Natural killer cell (primary cell): ENCODE measurements at regions of chr19 and their contacts with region 1.

Region 1: GRCh38 chr19:37370880-37371661 is at the start of gene ZNF527:
- DNase-seq: peak; percentile 96 to 98
- ATAC-seq: peak; percentile 92 to 96 (median 93)
- H3K4me3 ChIP-seq: peak within 1 kb of the TSS; percentile 81
- H3K4me3 Mint-ChIP-seq: peak within 1 kb of the TSS; percentile 98
- H3K27ac ChIP-seq: peak within 1 kb of the TSS; percentile 94
- H3K27ac Mint-ChIP-seq: peak within 1 kb of the TSS; percentile 93 to 99
- H3K4me1 ChIP-seq: peaks cover 12% of the 10 kb centered on the region
- H3K4me1 Mint-ChIP-seq: peaks cover 17 to 19% of the 10 kb centered on the region in 2 donors
- H3K27me3 ChIP-seq: no peaks in the 10 kb centered on the region
- H3K27me3 Mint-ChIP-seq: no peaks in the 10 kb centered on the region
- CTCF ChIP-seq: no peak
- total RNA-seq, gene ZNF527: 9.9 to 14.0 (median 13.6) TPM

Region 2: DNA sequence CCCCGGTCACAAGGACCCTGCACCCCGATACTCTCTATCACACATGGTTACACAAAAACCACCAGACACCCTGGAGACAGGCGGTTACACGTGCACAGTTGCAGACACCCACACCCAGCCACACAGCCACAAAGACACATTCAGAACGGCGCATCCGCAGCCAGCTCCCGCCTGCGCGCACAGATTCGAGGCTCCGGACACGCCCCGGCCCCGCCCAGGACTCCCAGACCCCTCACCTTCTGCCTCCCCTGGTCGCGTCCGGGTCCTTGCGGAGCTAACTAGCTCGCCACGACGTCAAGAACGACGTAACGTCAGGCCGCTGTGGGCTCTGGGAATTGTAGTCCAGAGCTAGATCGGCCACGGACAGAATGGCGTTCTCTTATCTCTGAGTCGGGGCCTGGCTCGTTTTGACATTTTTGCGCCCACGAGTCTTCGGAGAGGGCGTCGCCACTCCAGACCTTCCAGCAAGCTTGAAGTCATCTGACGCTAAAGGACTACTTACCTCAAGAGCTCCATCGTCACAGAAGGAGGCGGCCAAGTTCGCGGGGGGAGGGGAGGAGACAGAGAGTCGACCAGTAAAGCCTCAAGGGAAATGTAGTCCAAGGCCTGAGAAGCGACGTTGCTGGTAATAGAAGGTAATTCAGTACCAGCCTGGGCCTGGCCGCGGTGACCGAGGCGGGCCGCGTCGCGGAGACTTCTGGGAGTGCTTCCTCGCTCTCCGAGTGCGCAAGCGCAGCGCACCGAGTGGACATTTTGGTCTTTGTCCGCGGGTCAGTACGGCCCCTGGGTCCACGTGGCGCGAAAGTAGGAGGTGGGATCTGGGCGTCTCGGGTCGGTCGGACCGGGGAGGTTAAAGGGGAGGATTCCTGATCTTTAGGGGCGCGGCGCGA is 1156.4 kb before region 1 on chr19 and contains the starts of genes ZNF146 and ZNF565:
- intact Hi-C with region 1: loop called (anchors 2 kb)
- DNase-seq: peak; percentile 90 to 97
- ATAC-seq: peak; percentile 81 to 95 (median 86)
- H3K4me3 ChIP-seq: peak within 1 kb of the TSS; percentile 92
- H3K4me3 Mint-ChIP-seq: no peak within 1 kb of the TSS
- H3K27ac ChIP-seq: peak within 1 kb of the TSS; percentile 91
- H3K27ac Mint-ChIP-seq: no peak within 1 kb of the TSS
- H3K4me1 ChIP-seq: peaks cover 18% of the 10 kb centered on the region
- H3K4me1 Mint-ChIP-seq: peaks cover 12 to 14% of the 10 kb centered on the region in 2 donors
- H3K27me3 ChIP-seq: no peaks in the 10 kb centered on the region
- H3K27me3 Mint-ChIP-seq: no peaks in the 10 kb centered on the region
- CTCF ChIP-seq: no peak
- total RNA-seq, gene ZNF146: 20.3 to 37.3 (median 21.5) TPM
- total RNA-seq, gene ZNF565: 7.7 to 19.1 (median 10.5) TPM

Region 3: DNA sequence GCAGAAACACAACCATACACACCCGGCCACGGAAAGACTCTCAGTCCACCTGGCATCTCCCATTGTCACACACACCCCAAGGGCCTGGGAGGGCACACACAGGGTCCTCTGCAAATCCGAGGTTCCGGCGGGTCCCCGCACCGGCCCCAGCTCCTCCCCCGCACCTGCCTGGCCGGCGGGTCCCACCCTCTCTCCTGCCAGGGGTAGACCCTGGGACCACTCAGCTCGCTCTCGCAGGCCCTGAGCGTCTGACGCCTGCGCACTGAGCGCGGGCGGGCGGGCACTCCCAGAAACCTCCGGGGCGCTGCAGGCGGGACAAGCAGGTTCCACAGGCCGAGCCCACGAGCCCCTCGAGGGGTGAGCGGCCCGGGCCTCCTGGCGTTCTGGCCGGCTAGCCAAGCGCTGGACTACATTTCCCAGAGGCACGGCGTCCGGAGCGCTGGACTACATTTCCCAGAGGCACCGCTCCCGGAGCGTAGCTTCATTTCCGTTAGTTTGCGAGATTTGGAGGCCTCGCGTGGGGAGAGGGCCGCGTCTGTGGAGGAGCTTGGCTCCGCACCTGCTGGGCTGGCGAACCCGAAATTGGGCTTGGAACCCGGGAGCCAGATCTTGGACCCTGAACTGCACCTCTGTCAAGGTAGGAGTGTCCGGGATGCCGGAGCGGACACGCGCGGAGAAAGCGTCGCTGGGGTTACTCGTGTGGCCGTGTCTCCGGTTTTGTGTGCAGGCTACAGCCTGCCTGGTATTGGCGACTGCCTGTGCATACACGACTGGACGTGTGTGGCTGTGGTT is 292.9 kb before region 1 on chr19 and contains the start of gene ZNF420:
- intact Hi-C with region 1: loop called (anchors 2 kb)
- DNase-seq: peak; percentile 82 to 94
- ATAC-seq: peak; percentile 90 to 96 (median 93)
- H3K4me3 ChIP-seq: peak within 1 kb of the TSS; percentile 83
- H3K4me3 Mint-ChIP-seq: peak within 1 kb of the TSS; percentile 100
- H3K27ac ChIP-seq: peak within 1 kb of the TSS; percentile 77
- H3K27ac Mint-ChIP-seq: peak within 1 kb of the TSS; percentile 96 to 97
- H3K4me1 ChIP-seq: peaks cover 8% of the 10 kb centered on the region
- H3K4me1 Mint-ChIP-seq: peaks cover 32 to 37% of the 10 kb centered on the region in 2 donors
- H3K27me3 ChIP-seq: no peaks in the 10 kb centered on the region
- H3K27me3 Mint-ChIP-seq: no peaks in the 10 kb centered on the region
- CTCF ChIP-seq: no peak
- total RNA-seq, gene ZNF420: 6.4 to 15.6 (median 10.2) TPM

Region 4: GRCh38 chr19:37251308-37252229 is 119.5 kb before region 1 on chr19:
- intact Hi-C with region 1: no loop called
- DNase-seq: peak; percentile 50 to 68
- ATAC-seq: peak; percentile 88 to 97 (median 97)
- H3K4me3 ChIP-seq: peak overlapping the region; percentile 54
- H3K4me3 Mint-ChIP-seq: peak overlapping the region; percentile 88
- H3K27ac ChIP-seq: peak overlapping the region; percentile 34
- H3K27ac Mint-ChIP-seq: peak overlapping the region in 1 of 2 donors; percentile 70
- H3K4me1 ChIP-seq: peaks cover 14% of the 10 kb centered on the region
- H3K4me1 Mint-ChIP-seq: peaks cover 7 to 10% of the 10 kb centered on the region in 2 donors
- H3K27me3 ChIP-seq: no peaks in the 10 kb centered on the region
- H3K27me3 Mint-ChIP-seq: no peaks in the 10 kb centered on the region
- CTCF ChIP-seq: no peak

Region 5: DNA sequence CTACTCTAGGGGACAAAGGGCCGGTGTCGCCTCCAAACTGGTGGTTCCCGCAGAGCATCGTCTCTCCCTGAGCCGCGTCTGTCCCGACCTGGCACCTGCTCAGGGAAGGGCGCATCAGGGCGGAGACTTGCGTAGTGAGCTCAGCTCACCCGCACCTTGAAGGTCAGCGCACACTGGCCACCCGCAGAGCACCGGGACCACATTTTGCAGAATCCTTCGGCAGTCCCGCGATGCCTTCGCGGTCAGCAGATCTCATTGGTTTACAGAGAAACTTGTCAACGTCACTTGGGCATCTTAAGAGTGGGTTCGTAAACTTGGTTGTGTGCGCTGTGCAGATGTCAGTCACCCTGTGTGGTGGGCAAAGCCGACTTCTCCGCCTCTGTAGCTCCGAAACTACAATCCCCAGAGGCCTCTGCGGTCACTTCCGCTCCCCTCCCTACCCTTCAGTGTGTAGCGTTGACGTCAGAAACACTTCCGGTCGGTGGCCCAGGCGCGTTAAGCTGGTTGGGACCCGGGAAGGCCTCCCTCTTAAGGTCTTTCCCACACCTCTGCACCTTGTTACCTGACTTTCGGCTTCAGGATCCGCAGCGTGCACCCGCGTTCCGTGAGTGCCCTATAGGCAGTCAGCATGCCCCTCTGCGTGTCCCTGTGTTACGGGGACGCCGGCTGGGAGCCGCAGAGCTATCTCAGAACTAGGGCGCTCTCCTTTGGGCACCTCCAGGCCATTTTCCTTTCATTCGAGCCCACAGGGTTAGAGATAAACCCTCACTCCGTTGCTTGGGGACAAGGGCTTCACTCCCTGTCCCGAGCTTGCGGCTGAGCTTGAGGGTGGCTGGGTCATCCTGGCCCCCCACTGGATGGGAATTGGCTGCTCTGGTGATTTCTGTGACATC is 36.6 kb before region 1 on chr19:
- intact Hi-C with region 1: loop called (anchors 1 kb)
- DNase-seq: peak; percentile 79 to 96
- ATAC-seq: peak; percentile 84 to 99 (median 98)
- H3K4me3 ChIP-seq: peak overlapping the region; percentile 82
- H3K4me3 Mint-ChIP-seq: peak overlapping the region; percentile 88
- H3K27ac ChIP-seq: peak overlapping the region; percentile 83
- H3K27ac Mint-ChIP-seq: peak overlapping the region; percentile 83 to 89
- H3K4me1 ChIP-seq: peaks cover 20% of the 10 kb centered on the region
- H3K4me1 Mint-ChIP-seq: peaks cover 16 to 26% of the 10 kb centered on the region in 2 donors
- H3K27me3 ChIP-seq: no peaks in the 10 kb centered on the region
- H3K27me3 Mint-ChIP-seq: no peaks in the 10 kb centered on the region
- CTCF ChIP-seq: no peak

Region 6: GRCh38 chr19:37551129-37551993 is 180.3 kb after region 1 on chr19:
- intact Hi-C with region 1: loop called (anchors 1 kb)
- DNase-seq: peak; percentile 53 to 64
- ATAC-seq: peak; percentile 57 to 86 (median 78)
- H3K4me3 ChIP-seq: peak overlapping the region; percentile 58
- H3K4me3 Mint-ChIP-seq: peak overlapping the region; percentile 94
- H3K27ac ChIP-seq: peak overlapping the region; percentile 79
- H3K27ac Mint-ChIP-seq: peak overlapping the region; percentile 76 to 88
- H3K4me1 ChIP-seq: peaks cover 11% of the 10 kb centered on the region
- H3K4me1 Mint-ChIP-seq: peaks cover 10 to 12% of the 10 kb centered on the region in 2 donors
- H3K27me3 ChIP-seq: no peaks in the 10 kb centered on the region
- H3K27me3 Mint-ChIP-seq: no peaks in the 10 kb centered on the region
- CTCF ChIP-seq: peak; percentile 42

Region 7: DNA sequence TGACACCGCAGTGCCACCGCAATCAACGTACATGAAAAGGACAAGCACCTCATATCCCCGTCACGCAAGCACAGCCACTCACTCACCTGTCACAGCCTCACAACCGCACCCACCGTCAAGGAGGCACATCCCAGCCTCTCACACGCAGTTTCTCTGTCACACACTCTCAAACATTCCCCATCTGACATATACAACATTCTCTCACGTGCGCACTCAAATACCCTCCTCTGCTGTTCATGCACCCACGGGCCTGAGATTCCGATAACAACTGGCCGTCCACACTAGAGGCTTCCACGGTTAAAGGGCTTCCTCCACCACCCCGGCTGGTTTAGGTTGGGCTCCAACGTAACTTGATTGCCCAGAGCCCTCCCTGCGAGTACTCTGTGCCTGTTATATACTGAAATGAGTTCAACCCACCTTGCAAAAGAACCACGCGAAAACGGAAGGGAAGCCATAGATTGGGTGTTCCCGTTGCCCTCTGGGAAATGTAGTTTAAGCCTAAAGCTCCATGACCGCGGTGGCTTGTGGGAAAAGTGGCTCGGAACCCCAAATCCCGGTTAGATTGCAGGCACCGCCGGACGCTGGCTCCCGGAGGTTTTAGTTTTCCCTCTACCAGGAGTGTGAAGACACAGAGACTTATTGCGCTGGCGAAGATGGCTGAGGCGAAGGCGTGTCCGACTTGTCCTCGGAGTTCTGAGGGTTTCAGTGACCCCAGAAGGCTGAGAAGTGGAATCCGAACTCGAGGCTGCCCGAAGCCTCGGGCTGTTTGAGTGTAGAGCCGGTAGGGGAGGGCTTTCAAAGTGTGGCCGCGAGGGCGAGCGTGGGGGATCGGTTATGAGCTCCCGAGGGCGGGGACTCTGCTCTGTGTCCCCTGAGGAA is 408.3 kb after region 1 on chr19 and contains the start of gene ZNF573:
- intact Hi-C with region 1: loop called (anchors 2 kb)
- DNase-seq: peak; percentile 69 to 96
- ATAC-seq: peak; percentile 83 to 91 (median 83)
- H3K4me3 ChIP-seq: peak within 1 kb of the TSS; percentile 90
- H3K4me3 Mint-ChIP-seq: peak within 1 kb of the TSS; percentile 99
- H3K27ac ChIP-seq: peak within 1 kb of the TSS; percentile 95
- H3K27ac Mint-ChIP-seq: peak within 1 kb of the TSS; percentile 91 to 97
- H3K4me1 ChIP-seq: peaks cover 9% of the 10 kb centered on the region
- H3K4me1 Mint-ChIP-seq: peaks cover 31 to 36% of the 10 kb centered on the region in 2 donors
- H3K27me3 ChIP-seq: no peaks in the 10 kb centered on the region
- H3K27me3 Mint-ChIP-seq: no peaks in the 10 kb centered on the region
- CTCF ChIP-seq: no peak
- total RNA-seq, gene ZNF573: 10.0 to 15.5 (median 13.4) TPM